ENCODE measurements at regions of chr19 and their contacts with region 1.

Region 1: GRCh38 chr19:51393959-51394836 is 3.8 kb upstream of the C19orf84 start:
- DNase-seq: peak; percentile 99
- H3K4me3 ChIP-seq: peak overlapping the region; percentile 53 to 59 (median 56)
- H3K27ac ChIP-seq: peak overlapping the region; percentile 55
- H3K4me1 ChIP-seq: peaks cover 9% of the 10 kb centered on the region
- H3K27me3 ChIP-seq: no peaks in the 10 kb centered on the region
- CTCF ChIP-seq: peak in 1 of 2 donors; percentile 9

Region 2: GRCh38 chr19:51367565-51368365 is 26.4 kb before region 1 on chr19:
- CTCF ChIA-PET with region 1: no interaction called
- dilution Hi-C with region 1: no loop called
- in situ Hi-C with region 1: no loop called
- intact Hi-C with region 1: loop called (anchors 1 kb)
- DNase-seq: peak; percentile 95
- H3K4me3 ChIP-seq: peak overlapping the region; percentile 61 to 68 (median 67)
- H3K27ac ChIP-seq: peak overlapping the region; percentile 58
- H3K4me1 ChIP-seq: peaks cover 19% of the 10 kb centered on the region
- H3K27me3 ChIP-seq: no peaks in the 10 kb centered on the region
- CTCF ChIP-seq: no peak